Activated CD4-positive, alpha-beta memory T cell treated with anti-CD3 and anti-CD28 coated beads, Interleukin-2, amount 10 ng/mL, durations not matched to agents 7 days and 5 days (primary cell): ENCODE measurements at regions of chr19 and their contacts with region 1.

Region 1: GRCh38 chr19:34345947-34346351 is 19.0 kb upstream of the GPI start:
- DNase-seq: peak; percentile 75
- H3K4me3 Mint-ChIP-seq: no peak overlapping the region
- H3K27ac Mint-ChIP-seq: no peak overlapping the region
- H3K4me1 Mint-ChIP-seq: peaks cover 26% of the 10 kb centered on the region
- H3K27me3 Mint-ChIP-seq: no peaks in the 10 kb centered on the region

Region 2: GRCh38 chr19:34209726-34210125 is 136.2 kb before region 1 on chr19:
- CTCF ChIA-PET with region 1: no interaction called
- POLR2A ChIA-PET with region 1: no interaction called
- DNase-seq: no peak
- H3K4me3 Mint-ChIP-seq: no peak overlapping the region
- H3K27ac Mint-ChIP-seq: no peak overlapping the region
- H3K4me1 Mint-ChIP-seq: peaks cover 2% of the 10 kb centered on the region
- H3K27me3 Mint-ChIP-seq: no peaks in the 10 kb centered on the region

Region 3: GRCh38 chr19:34224996-34225658 is 120.8 kb before region 1 on chr19:
- CTCF ChIA-PET with region 1: interaction called, 10 read pairs
- POLR2A ChIA-PET with region 1: interaction called, 3 read pairs
- DNase-seq: no peak
- H3K4me3 Mint-ChIP-seq: no peak overlapping the region
- H3K27ac Mint-ChIP-seq: peak overlapping the region; percentile 60
- H3K4me1 Mint-ChIP-seq: peaks cover 57% of the 10 kb centered on the region
- H3K27me3 Mint-ChIP-seq: no peaks in the 10 kb centered on the region

Region 4: GRCh38 chr19:34300962-34301361 is 45.0 kb before region 1 on chr19:
- CTCF ChIA-PET with region 1: no interaction called
- POLR2A ChIA-PET with region 1: no interaction called
- DNase-seq: no peak
- H3K4me3 Mint-ChIP-seq: no peak overlapping the region
- H3K27ac Mint-ChIP-seq: no peak overlapping the region
- H3K4me1 Mint-ChIP-seq: no peaks in the 10 kb centered on the region
- H3K27me3 Mint-ChIP-seq: no peaks in the 10 kb centered on the region